Ascending aorta (tissue), 2 donors: ENCODE measurements at regions of chr4 and their contacts with region 1.

Region 1: GRCh38 chr4:169059306-169060211 is 49.5 kb upstream of the CBR4 start:
- DNase-seq: peak in 1 of 2 donors; percentile 83
- H3K4me3 ChIP-seq: peak overlapping the region in 1 of 2 donors; percentile 44
- H3K27ac ChIP-seq: peak overlapping the region; percentile 82 to 84
- H3K4me1 ChIP-seq: peaks cover 4 to 32% of the 10 kb centered on the region in 2 donors
- H3K27me3 ChIP-seq: no peaks in the 10 kb centered on the region
- CTCF ChIP-seq: no peak

Region 2: GRCh38 chr4:169099771-169100180 is 40.2 kb after region 1 on chr4:
- intact Hi-C with region 1: loop called (anchors 5 kb)
- DNase-seq: no peak
- H3K4me3 ChIP-seq: no peak overlapping the region
- H3K27ac ChIP-seq: peak overlapping the region; percentile 72 to 79
- H3K4me1 ChIP-seq: peaks cover 7 to 20% of the 10 kb centered on the region in 2 donors
- H3K27me3 ChIP-seq: no peaks in the 10 kb centered on the region
- CTCF ChIP-seq: no peak

Region 3: GRCh38 chr4:169115897-169116254 is 56.3 kb after region 1 on chr4:
- intact Hi-C with region 1: loop called (anchors 5 kb)
- DNase-seq: peak in 1 of 2 donors; percentile 73
- H3K4me3 ChIP-seq: no peak overlapping the region
- H3K27ac ChIP-seq: peak overlapping the region; percentile 77 to 90
- H3K4me1 ChIP-seq: peaks cover 0 to 9% of the 10 kb centered on the region in 2 donors
- H3K27me3 ChIP-seq: no peaks in the 10 kb centered on the region
- CTCF ChIP-seq: peak in 2 of 3 experiments; percentile 29 to 30

Region 4: GRCh38 chr4:169540774-169541173 is 481.2 kb after region 1 on chr4:
- intact Hi-C with region 1: no loop called
- DNase-seq: no peak
- H3K4me3 ChIP-seq: no peak overlapping the region
- H3K27ac ChIP-seq: no peak overlapping the region
- H3K4me1 ChIP-seq: no peaks in the 10 kb centered on the region
- H3K27me3 ChIP-seq: no peaks in the 10 kb centered on the region
- CTCF ChIP-seq: no peak